Activated T-helper 1 cell treated with anti-CD3 and anti-CD28 coated beads, Interleukin-12 subunit alpha, Interleukin-12 subunit beta, Interleukin-2, Interleukin-4 antibody, amounts not matched to agents 30 ng/mL and 10 ng/mL and 1 ng/mL, durations not matched to agents 14 hours and 24 hours and 36 hours (primary cell): ENCODE measurements at regions of chr19 and their contacts with region 1.

Region 1: GRCh38 chr19:33302175-33302973 is at the start of gene CEBPA:
- DNase-seq: peak; percentile 45
- H3K4me3 Mint-ChIP-seq: peak within 1 kb of the TSS; percentile 59
- H3K27ac Mint-ChIP-seq: no peak within 1 kb of the TSS
- H3K4me1 Mint-ChIP-seq: no peaks in the 10 kb centered on the region
- H3K27me3 Mint-ChIP-seq: peaks cover 42% of the 10 kb centered on the region
- total RNA-seq, gene CEBPA: 1.8 and 2.1 TPM in 2 replicates

Region 2: GRCh38 chr19:32674959-32675719 is 627.2 kb before region 1 on chr19 and contains the start of gene ANKRD27:
- intact Hi-C with region 1: loop called (anchors 5 kb)
- DNase-seq: peak; percentile 98
- H3K4me3 Mint-ChIP-seq: peak within 1 kb of the TSS; percentile 89
- H3K27ac Mint-ChIP-seq: peak within 1 kb of the TSS; percentile 89
- H3K4me1 Mint-ChIP-seq: peaks cover 28% of the 10 kb centered on the region
- H3K27me3 Mint-ChIP-seq: peaks cover 31% of the 10 kb centered on the region
- total RNA-seq, gene ANKRD27: 28.2 and 28.7 TPM in 2 replicates

Region 3: DNA sequence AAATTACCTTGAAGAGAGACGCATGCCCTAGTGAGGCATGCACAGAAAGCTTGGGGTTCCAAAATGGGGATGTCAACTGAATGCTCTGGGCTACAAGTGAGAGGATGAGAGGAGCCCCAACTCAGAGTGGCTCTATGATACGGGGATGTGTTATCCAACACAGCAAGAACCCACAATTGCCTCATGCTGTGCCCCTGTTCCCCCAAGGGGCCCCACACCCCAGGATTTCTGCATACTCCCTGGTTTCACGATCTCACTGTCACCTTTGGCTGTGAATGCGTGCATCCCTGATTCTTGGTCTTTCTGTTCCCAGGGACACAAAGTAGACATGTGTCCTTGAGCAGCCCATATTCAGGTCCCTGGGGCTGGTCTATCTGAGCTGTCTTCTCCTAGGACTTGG is 141.2 kb before region 1 on chr19:
- intact Hi-C with region 1: loop called (anchors 2 kb)
- DNase-seq: no peak
- H3K4me3 Mint-ChIP-seq: no peak overlapping the region
- H3K27ac Mint-ChIP-seq: peak overlapping the region; percentile 94
- H3K4me1 Mint-ChIP-seq: peaks cover 37% of the 10 kb centered on the region
- H3K27me3 Mint-ChIP-seq: no peaks in the 10 kb centered on the region

Region 4: GRCh38 chr19:33235269-33235995 is 66.9 kb before region 1 on chr19:
- intact Hi-C with region 1: loop called (anchors 1 kb)
- DNase-seq: peak; percentile 58
- H3K4me3 Mint-ChIP-seq: no peak overlapping the region
- H3K27ac Mint-ChIP-seq: no peak overlapping the region
- H3K4me1 Mint-ChIP-seq: no peaks in the 10 kb centered on the region
- H3K27me3 Mint-ChIP-seq: peaks cover 2% of the 10 kb centered on the region

Region 5: GRCh38 chr19:33280351-33280921 is 21.9 kb before region 1 on chr19:
- intact Hi-C with region 1: loop called (anchors 2 kb)
- DNase-seq: peak; percentile 47
- H3K4me3 Mint-ChIP-seq: peak overlapping the region; percentile 34
- H3K27ac Mint-ChIP-seq: peak overlapping the region; percentile 86
- H3K4me1 Mint-ChIP-seq: peaks cover 20% of the 10 kb centered on the region
- H3K27me3 Mint-ChIP-seq: peaks cover 6% of the 10 kb centered on the region

Region 6: GRCh38 chr19:33373701-33374421 is 71.5 kb after region 1 on chr19 and contains the start of gene CEBPG:
- intact Hi-C with region 1: loop called (anchors 1 kb)
- DNase-seq: peak; percentile 60
- H3K4me3 Mint-ChIP-seq: peak within 1 kb of the TSS; percentile 93
- H3K27ac Mint-ChIP-seq: peak within 1 kb of the TSS; percentile 69
- H3K4me1 Mint-ChIP-seq: peaks cover 39% of the 10 kb centered on the region
- H3K27me3 Mint-ChIP-seq: no peaks in the 10 kb centered on the region
- total RNA-seq, gene CEBPG: 30.4 and 31.3 TPM in 2 replicates

Region 7: DNA sequence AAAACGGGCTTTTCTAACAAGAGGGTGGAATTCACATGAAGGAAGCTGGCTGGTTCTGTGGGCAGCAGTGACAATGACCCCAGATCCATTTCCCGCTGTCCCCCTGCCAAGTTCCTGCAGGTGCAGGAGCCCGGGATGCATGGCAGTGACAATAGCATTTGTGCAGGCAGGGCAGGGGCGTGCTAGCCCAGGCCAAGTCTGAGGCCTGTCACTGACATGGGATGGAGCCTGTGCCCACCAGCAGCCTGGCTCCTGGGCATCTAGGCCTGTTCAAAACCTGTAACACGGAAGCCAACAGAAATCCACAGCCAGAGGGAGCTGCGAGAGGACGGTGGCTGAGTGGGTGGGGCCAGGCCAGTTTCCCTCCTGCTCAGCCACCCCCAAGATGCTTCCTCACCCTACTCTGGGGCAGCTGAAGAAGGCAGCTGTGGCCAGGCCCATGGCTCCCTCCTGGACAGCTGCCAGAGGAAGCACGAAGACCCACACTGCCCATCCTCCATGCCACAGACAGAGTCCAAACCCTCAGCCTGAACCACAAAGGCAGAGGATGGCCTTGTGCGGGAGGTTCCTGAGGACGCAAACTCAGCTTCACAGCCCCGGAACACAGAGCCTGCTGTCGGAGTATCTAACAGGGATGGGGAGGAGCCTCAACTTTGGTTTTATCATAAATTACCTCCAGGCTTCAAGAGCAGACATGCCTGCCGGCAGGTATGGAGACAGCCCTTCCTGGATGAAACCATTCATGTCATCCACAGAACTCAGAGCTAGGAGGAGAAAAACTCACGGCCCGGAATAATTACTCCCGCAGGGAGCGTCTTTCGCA is 145.2 kb after region 1 on chr19:
- intact Hi-C with region 1: no loop called
- DNase-seq: no peak
- H3K4me3 Mint-ChIP-seq: no peak overlapping the region
- H3K27ac Mint-ChIP-seq: no peak overlapping the region
- H3K4me1 Mint-ChIP-seq: no peaks in the 10 kb centered on the region
- H3K27me3 Mint-ChIP-seq: no peaks in the 10 kb centered on the region